Posterior vena cava (tissue), 2 donors: ENCODE measurements at regions of chr13 and their contacts with region 1.

Region 1: DNA sequence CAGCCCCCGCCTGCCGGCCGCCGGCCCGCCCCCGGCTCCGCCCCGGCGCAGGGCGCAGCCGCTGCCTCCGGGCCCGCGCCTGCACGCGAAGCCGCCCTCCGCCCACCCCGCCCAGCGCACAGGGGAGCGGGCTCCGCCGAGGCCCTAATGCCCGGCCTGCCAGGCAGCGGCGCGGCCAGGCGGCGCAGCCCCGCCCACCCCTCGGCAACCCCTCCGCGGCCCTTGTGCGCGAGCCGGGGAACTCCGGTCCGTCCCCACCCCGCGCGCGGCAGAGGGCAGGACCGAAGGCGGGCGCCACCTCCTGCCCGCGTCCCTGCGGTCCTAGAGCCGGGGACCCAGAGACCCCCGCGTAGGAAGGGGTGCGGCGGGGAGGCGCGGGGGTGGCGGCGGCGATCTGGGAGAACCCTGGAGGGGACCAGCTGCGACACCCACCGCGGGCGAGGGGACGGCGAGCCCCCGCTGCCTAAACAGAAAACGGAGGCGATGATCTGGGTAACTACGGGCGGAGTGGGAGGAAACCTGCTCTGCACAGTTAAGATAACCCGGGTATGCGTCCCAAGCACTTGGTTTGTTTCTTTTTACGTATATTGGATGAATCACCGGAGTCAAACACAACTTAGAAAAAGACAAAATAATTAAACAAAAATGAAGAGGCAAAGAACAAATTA is 350 bp upstream of the USP12 start:
- DNase-seq: peak; percentile 98

Region 2: GRCh38 chr13:26991508-26992181 is 180.3 kb before region 1 on chr13:
- intact Hi-C with region 1: loop called in 1 of 2 experiments (anchors 5 kb)
- DNase-seq: peak; percentile 66

Region 3: DNA sequence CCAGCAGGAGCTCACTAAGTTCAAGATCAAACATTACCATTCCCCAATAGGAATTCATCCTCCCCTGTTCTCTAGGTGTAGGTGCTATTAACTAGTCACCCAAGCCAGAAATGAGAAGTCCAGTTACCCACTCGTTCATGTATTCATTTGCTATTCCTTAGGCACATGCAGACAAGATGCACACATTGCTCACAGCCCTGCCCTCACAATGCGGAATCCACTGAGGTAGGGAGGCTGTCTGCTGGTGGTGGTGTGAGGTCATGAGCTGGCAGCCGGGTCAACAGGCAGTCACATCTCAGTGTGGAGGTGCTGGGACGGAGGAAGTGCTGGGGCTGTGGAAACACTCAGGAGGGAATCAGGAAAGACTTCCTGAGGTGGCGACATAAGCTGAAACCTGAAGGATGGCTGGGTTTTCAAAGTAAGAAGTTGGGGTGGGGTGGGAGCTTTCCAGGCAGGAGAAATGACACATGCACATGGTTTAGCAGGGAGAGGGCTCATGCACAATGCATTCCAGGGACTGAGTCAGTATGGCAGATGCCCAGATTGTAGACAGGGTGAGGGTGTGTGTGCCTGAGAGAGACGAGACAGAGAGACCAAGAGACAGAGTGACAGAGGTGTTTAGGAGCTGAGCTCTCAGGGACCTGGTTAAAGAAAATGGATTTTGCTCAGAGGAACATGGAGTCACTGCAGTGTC is 117.9 kb before region 1 on chr13:
- intact Hi-C with region 1: no loop called
- DNase-seq: no peak

Region 4: DNA sequence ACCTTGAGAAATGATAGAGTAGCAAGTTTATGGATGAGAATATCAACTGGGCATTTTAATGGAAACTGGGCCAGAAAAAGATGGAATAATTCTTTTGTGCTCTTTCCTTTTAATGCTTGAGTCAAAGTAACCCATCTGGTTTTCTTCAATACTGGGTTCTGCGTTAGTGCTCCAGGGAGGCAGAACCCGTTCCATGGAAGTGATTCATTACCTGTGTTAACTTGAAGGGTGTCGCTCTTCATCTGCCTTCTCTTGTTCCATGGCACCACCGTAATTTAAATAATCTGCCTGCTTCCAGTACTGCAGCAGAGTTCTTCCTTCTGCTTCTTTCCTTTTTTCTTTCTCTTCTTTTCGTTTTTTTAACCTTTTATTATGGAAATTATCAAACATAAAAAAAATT is 14.3 kb after region 1 on chr13:
- intact Hi-C with region 1: no loop called
- DNase-seq: no peak

Region 5: DNA sequence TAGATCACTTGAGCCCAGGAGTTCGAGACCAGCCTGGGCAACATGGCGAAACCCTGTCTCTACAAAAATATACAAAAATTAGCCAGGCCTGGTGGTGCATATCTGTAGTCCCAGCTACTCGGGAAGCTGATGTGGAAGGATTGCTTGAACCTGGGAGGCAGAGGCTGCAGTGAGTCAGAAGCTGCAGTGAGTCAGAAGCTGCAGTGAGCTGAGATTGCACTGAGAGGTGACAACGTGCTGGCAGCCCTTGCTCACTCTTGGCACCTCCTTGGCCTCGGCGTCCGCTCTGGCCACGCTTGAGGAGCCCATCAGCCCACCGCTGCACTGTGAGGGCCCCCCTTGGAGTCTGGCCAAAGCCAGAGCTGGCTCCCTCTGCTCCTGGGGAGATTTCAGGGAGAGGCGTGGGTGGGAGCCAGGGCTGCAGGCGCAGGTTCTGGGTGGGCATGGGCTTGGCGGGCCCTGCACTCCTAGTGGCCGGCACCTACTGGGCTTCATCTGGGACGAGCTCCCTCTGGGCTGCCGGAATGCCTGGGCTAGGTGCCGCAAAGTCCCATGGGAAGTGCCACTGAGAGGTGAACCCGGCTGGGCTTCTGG is 39.9 kb after region 1 on chr13:
- intact Hi-C with region 1: no loop called
- DNase-seq: no peak

Region 6: DNA sequence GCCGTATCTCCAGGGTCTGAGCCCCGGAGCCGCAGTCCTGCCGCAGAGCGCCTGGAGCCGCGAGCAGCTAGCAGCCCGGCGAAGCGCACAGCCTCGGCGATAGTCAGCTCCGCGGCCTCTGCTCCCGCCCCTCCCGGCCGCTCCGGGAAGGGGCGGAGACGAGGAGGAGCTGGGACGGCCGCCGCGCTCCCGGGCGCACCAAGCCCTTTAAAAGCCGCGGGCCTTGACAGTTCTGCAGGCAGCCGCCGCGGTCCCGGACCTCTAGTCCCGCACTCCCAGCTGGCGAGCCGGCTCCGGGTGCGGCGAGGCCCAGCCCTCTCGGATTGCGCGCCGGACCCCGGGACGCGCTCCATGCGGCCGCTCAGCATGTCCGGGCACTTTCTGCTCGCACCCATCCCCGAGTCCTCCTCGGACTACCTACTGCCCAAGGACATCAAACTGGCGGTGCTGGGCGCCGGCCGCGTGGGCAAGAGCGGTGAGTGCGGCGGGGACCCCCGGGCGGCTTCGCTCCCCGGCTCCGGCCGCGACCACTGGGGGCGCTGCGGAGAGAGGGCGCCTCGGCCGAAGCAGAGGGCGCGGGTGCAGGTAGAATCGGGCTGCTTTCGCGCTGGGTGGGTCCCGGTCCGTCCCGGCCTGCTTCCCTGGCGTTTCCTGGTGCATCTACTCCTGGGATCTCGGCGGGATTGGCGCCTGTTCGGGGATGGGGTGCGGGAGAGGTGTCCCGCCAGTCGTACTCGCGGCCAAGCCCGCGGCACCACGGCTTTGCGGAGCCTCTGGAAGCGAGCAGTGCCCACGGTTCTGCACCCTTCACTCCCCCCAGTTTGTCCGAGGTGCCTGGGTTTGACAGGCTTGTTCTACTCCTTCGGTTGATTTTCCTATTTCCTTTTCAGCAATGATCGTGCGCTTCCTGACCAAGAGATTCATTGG is 98.9 kb after region 1 on chr13 and contains the start of gene RASL11A:
- intact Hi-C with region 1: loop called in 1 of 2 experiments (anchors 5 kb)
- DNase-seq: peak; percentile 95
- total RNA-seq, gene RASL11A: 39.7 to 46.4 TPM

Region 7: DNA sequence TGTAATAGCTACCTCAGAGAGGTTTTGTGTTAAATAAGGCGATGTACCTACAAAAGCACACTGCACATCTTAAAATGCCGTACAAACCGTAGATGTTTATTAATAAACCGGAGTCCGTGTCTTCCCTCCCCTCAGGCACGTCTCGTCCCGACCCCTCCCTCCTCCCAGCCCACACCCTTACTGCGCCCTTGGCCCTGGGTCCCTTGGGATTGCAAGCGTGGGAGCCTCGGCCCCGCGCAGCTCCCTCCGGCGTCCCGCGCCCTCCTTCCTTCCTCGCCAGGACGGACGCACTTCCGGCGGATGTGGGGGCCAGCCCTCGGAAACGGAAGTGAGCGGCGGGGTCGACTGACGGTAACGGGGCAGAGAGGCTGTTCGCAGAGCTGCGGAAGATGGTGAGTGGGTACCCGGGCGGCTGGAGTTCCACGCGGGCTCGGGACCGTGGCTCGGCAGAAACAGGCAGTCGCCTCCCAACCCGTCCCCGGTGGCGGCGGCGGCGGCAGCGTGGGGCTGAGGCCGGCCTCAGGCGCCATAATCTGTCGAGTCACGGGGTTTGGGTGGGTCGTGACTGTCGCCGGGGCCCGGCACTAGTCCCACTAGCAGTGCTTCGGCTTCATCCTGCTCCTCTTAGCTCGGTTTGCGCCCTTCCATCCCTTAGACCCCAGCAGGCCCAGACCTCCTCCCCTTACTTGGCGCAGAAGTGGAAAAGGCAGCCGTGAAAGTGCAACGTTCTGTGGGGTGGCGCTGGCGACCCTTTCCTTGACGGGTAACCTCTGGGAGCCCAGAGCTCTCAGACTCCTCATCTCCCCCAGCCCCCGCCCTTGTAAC is 1487.0 kb after region 1 on chr13 and contains the start of gene POMP:
- intact Hi-C with region 1: loop called in 1 of 2 experiments (anchors 10 kb)
- DNase-seq: peak; percentile 98
- total RNA-seq, gene POMP: 58.9 to 65.9 TPM